ENCODE measurements at regions of chr5 and their contacts with region 1.

Region 1: DNA sequence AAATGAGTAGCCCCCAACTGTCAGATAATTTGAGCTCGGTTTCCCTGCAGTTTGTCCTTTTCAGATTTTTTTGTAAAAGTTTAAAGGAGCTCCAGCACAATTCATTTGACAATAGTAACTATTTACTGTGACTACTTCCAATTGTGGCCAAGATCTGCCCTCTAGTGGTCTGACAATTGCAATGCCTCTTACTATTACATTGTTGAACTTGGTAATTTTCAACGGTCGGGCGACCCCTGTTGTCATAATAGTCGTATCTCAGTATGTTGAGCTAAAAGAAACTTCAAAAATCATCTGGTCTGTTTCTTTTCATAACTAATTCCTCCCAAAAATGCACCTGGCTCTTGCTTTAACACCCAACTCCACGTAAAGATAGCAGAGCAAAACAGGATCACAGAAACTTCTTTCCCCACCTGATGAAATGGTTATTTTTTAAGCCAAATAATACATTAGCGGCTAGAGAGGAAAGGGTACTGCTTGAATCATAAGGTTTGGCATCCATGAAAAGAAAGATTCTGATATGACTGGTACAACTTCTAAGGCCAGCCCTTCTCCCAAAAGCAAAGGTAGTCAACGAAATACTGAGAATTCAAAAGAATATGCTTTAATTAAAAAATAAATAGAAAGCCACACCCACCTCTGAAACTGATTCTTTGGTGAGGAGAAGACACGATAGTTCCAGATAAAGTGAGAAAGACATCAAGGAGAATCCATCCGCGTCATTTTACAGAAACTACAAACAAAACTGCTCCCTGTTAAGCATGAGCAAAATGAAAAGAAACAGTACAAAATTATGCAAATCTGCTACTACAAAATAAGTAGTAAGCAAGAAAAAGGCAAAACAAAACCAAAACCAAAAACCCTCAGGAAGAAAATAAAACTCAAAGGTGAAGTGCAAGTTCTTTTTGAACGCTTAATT is 76.9 kb upstream of the HTR4 start:
- DNase-seq: peak; percentile 85
- ATAC-seq: peak; percentile 95
- H3K4me3 Mint-ChIP-seq: peak overlapping the region; percentile 78
- H3K27ac Mint-ChIP-seq: peak overlapping the region; percentile 93
- H3K4me1 Mint-ChIP-seq: peaks cover 21% of the 10 kb centered on the region
- H3K27me3 Mint-ChIP-seq: peaks cover 5% of the 10 kb centered on the region

Region 2: DNA sequence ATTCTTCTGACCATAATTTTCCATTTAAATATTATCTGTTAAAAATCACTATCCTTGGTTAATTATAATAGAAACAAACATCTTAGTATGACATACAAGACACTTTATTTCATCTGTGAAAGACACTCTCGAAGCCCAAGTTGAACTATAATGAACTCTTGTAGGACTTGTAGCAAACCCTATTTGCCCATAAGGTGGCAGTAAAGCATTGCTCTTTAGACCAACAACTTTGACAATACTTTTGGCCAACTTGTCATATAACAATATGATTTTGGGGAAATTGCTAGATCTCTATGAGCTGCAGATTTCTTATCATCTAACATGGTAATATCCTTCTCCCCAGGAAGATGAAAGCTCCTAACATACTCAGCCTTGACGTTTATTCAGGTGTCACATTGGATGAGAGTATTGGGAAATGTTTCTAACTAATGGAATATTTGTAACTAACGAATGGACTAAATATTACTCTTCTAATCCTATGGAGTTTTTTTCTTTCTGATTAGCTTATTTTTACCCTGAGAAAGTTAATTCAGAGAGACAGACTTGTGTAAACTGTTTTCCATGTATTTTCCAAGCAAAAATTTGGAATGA is 551.9 kb before region 1 on chr5:
- CTCF ChIA-PET with region 1: interaction called, 30 read pairs
- DNase-seq: no peak
- ATAC-seq: no peak
- H3K4me3 Mint-ChIP-seq: no peak overlapping the region
- H3K27ac Mint-ChIP-seq: no peak overlapping the region
- H3K4me1 Mint-ChIP-seq: no peaks in the 10 kb centered on the region
- H3K27me3 Mint-ChIP-seq: peaks cover 23% of the 10 kb centered on the region

Region 3: GRCh38 chr5:148482691-148483462 is 248.3 kb before region 1 on chr5:
- CTCF ChIA-PET with region 1: interaction called, 11 read pairs
- DNase-seq: peak; percentile 75
- ATAC-seq: peak; percentile 78
- H3K4me3 Mint-ChIP-seq: no peak overlapping the region
- H3K27ac Mint-ChIP-seq: no peak overlapping the region
- H3K4me1 Mint-ChIP-seq: peaks cover 4% of the 10 kb centered on the region
- H3K27me3 Mint-ChIP-seq: peaks cover 44% of the 10 kb centered on the region

Region 4: GRCh38 chr5:148957591-148958202 is 226.5 kb after region 1 on chr5:
- CTCF ChIA-PET with region 1: interaction called, 65 read pairs
- DNase-seq: peak; percentile 64
- ATAC-seq: peak; percentile 51
- H3K4me3 Mint-ChIP-seq: no peak overlapping the region
- H3K27ac Mint-ChIP-seq: no peak overlapping the region
- H3K4me1 Mint-ChIP-seq: no peaks in the 10 kb centered on the region
- H3K27me3 Mint-ChIP-seq: peaks cover 2% of the 10 kb centered on the region

Region 5: DNA sequence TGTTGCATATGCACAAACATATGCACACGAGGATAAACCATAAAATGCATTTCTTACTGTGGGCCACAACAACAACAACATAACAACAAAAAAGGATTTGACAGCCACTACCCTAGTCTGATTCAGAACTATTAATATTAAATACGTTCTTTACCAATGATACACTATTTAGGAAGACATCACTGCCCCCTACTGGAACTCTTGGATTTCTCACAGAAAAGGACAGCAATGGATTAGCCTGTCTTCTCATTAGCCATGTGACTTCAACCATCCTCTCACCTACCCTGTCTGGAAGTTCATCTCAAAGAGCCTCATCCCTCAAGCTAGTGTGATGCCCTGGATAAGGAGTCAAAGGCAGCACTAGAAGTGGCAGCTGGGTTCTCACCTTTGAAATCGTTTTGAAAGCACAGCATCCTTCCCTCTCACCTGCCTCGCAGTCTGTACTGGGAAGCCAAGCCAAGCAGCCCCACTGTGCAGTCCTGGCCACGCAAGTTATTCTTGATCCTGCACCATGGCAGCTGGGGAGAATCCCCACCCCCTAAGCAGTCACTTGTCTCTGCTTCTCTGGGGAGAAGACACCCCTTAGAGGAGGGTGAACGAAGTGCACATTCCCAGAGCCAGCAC is 267.1 kb after region 1 on chr5:
- CTCF ChIA-PET with region 1: interaction called, 37 read pairs
- DNase-seq: peak; percentile 49
- ATAC-seq: peak; percentile 69
- H3K4me3 Mint-ChIP-seq: no peak overlapping the region
- H3K27ac Mint-ChIP-seq: no peak overlapping the region
- H3K4me1 Mint-ChIP-seq: no peaks in the 10 kb centered on the region
- H3K27me3 Mint-ChIP-seq: peaks cover 37% of the 10 kb centered on the region

Region 6: GRCh38 chr5:149114403-149115312 is 383.5 kb after region 1 on chr5:
- CTCF ChIA-PET with region 1: interaction called, 17 read pairs
- DNase-seq: peak; percentile 61
- ATAC-seq: peak; percentile 86
- H3K4me3 Mint-ChIP-seq: no peak overlapping the region
- H3K27ac Mint-ChIP-seq: no peak overlapping the region
- H3K4me1 Mint-ChIP-seq: peaks cover 11% of the 10 kb centered on the region
- H3K27me3 Mint-ChIP-seq: peaks cover 46% of the 10 kb centered on the region

Measured in activated CD8-positive, alpha-beta memory T cell treated with anti-CD3 and anti-CD28 coated beads, Interleukin-2, amount 10 ng/mL, durations not matched to agents 7 days and 5 days (primary cell).